Activated naive CD4-positive, alpha-beta T cell treated with anti-CD3 and anti-CD28 coated beads for 36 hours (primary cell): ENCODE measurements at regions of chr6 and their contacts with region 1.

Region 1: GRCh38 chr6:89638320-89639195 is at the start of gene LYRM2:
- DNase-seq: peak; percentile 95
- H3K4me3 Mint-ChIP-seq: peak within 1 kb of the TSS; percentile 83
- H3K27ac Mint-ChIP-seq: peak within 1 kb of the TSS; percentile 96
- H3K4me1 Mint-ChIP-seq: peaks cover 28% of the 10 kb centered on the region
- H3K27me3 Mint-ChIP-seq: no peaks in the 10 kb centered on the region
- total RNA-seq, gene LYRM2: 15.8 to 18.3 TPM

Region 2: DNA sequence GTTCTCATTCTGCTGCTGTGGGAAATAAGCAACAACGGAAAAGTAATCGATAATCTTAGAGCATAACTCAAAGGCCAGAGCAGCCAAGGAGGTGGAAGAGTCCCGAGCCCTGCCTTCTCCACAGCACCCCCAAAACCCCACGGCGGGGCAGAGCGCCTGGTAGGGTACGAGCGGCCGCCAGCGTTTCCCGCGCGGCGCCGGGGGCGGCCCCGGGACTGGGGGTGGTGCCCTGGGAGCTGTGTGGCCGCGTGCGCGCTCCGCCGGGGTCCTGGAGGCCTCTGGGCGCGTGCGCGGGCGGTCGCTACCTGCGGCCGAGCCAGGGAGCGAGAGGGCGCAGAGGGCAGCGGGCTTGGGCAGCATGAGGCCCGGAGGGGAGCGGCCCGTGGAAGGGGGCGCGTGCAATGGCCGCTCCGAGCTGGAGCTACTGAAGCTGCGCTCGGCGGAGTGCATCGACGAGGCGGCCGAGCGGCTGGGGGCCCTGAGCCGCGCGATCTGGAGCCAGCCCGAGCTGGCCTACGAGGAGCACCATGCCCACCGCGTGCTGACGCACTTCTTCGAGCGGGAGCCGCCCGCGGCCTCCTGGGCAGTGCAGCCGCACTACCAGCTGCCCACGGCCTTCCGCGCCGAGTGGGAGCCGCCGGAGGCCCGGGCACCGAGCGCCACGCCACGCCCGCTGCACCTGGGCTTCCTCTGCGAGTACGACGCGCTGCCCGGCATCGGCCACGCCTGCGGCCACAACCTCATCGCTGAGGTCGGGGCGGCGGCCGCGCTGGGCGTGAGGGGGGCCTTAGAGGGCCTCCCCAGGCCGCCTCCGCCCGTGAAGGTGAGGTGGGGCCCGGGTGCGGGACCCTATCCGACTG is 492.5 kb before region 1 on chr6 and contains the start of gene PM20D2:
- CTCF ChIA-PET with region 1: no interaction called
- intact Hi-C with region 1: loop called (anchors 1 kb)
- DNase-seq: peak; percentile 59
- H3K4me3 Mint-ChIP-seq: peak within 1 kb of the TSS; percentile 90
- H3K27ac Mint-ChIP-seq: peak within 1 kb of the TSS; percentile 96
- H3K4me1 Mint-ChIP-seq: peaks cover 27% of the 10 kb centered on the region
- H3K27me3 Mint-ChIP-seq: no peaks in the 10 kb centered on the region
- total RNA-seq, gene PM20D2: 11.6 to 12.7 TPM

Region 3: DNA sequence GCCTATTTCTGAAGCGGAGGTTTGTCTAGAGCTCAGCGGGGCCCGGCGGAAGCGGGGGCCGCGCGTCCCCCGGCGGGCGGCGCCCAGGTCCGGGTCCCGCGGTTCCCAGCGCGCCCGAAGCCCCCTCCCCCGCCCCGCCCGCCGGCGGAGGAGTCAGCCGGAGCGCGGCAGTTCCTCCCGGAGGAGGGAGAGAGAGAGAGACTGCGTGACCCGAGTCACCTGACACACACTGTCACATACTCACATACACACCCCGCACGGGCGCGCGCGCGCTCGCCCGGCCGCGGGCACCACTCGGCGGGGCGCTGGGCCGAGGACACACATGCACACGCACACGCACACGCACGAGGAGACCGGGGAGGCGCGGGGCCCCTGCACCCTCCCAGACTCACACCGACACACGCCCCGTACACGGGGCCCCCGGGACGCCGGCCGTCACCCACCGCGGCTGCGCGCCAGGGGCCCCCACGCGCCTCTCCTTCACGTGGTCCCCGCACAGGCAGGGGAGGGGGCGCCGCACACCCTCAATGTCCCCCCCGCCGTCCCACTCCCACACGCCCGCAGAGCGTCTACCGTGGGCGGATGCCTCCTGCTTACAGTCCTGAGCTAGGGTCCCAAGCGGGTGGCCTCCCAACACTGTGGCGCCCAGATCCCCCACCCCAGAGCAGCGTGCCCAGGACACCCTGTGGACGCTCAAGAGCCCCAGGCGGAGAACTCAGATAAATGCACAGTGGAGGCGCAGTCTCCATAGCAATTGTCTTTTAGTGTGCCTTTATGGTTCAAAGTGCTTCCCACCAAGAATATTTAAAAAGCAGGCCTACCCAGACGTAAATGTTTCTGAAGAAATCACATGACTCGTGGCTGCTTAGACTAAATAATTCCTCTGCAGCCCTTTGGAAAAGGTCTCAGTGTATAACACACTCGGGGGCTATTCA is 226.2 kb before region 1 on chr6 and contains the start of gene RRAGD:
- CTCF ChIA-PET with region 1: no interaction called
- intact Hi-C with region 1: loop called (anchors 1 kb)
- DNase-seq: peak; percentile 67
- H3K4me3 Mint-ChIP-seq: peak within 1 kb of the TSS; percentile 91
- H3K27ac Mint-ChIP-seq: peak within 1 kb of the TSS; percentile 31
- H3K4me1 Mint-ChIP-seq: peaks cover 23% of the 10 kb centered on the region
- H3K27me3 Mint-ChIP-seq: peaks cover 4% of the 10 kb centered on the region
- total RNA-seq, gene RRAGD: 11.3 to 13.2 TPM

Region 4: DNA sequence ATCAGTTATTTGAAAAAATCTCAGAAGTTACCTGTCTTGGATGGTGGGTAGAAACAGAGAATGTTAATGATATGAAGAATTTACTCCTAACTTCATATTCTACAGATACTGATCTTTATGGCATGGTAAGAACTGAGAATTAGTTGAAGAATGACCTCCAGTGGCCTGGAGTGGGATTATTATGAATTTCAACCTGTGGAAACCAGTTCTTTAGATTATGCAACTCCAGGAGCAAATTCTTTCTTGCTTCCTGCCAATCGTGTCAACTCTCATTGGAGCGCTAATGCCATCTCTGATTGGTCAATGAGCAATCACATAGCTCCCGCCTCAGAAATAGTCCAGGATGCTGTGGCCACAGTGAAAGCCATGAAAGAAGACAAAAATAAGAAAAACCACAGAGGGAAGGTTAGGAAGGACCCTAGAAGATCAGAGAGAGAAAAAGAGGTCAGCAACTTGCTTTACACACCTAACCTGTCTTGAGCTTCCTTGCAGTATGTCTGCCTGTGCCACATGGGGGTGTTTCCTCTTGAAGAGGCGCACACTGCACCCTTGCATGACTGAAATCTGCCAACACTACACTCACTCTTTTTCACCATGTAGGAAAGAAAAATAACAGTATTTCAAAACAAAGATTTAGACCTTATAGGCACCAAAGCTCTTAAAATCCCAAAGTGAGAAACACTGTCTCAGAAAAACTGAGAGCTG is 40.4 kb before region 1 on chr6:
- CTCF ChIA-PET with region 1: no interaction called
- intact Hi-C with region 1: loop called (anchors 2 kb)
- DNase-seq: peak; percentile 7
- H3K4me3 Mint-ChIP-seq: no peak overlapping the region
- H3K27ac Mint-ChIP-seq: no peak overlapping the region
- H3K4me1 Mint-ChIP-seq: peaks cover 18% of the 10 kb centered on the region
- H3K27me3 Mint-ChIP-seq: no peaks in the 10 kb centered on the region

Region 5: GRCh38 chr6:89649672-89650071 is 11.1 kb after region 1 on chr6:
- CTCF ChIA-PET with region 1: no interaction called
- intact Hi-C with region 1: no loop called
- DNase-seq: no peak
- H3K4me3 Mint-ChIP-seq: no peak overlapping the region
- H3K27ac Mint-ChIP-seq: no peak overlapping the region
- H3K4me1 Mint-ChIP-seq: peaks cover 3% of the 10 kb centered on the region
- H3K27me3 Mint-ChIP-seq: no peaks in the 10 kb centered on the region

Region 6: DNA sequence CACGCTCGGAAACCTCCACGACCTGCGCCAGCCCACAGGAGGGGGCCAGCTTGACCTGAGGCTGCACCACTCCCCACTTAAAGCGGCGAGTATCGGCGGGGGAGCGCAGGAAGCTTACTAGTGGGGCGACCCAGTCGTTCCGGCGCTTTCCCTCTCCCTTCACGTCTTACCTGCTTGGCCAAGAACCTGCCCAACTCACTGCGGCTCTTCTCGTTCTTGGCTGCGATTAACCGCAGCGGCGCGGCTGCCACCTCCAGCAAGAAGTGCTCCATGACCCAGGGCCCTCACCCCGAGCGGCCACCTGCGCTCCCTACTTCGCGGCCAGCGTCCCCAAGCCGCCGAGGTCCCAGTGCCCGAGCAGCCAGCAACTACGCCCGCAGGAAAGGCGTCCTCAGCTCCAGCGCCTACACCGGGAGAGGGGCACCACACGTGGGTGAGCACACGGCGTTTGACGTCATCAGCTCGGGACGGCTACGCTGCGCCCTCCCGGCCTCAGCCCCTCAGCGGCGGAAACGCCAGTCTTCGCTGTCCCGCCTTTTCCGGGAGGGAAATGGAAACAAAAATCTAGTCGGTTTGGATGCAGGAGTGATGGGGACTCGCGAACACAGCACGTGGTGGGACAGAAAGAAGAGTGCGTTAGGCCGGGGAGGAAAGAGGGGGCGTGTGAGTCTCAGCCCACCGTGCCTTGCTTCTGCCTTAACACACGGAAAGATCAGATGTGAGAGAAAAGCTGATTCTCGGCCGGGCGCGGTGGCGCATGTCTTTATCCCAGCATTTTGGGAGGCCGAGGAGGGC is 181.0 kb after region 1 on chr6 and contains the start of gene MDN1:
- CTCF ChIA-PET with region 1: no interaction called
- intact Hi-C with region 1: loop called (anchors 1 kb)
- DNase-seq: peak; percentile 94
- H3K4me3 Mint-ChIP-seq: peak within 1 kb of the TSS; percentile 82
- H3K27ac Mint-ChIP-seq: peak within 1 kb of the TSS; percentile 88
- H3K4me1 Mint-ChIP-seq: peaks cover 36% of the 10 kb centered on the region
- H3K27me3 Mint-ChIP-seq: no peaks in the 10 kb centered on the region
- total RNA-seq, gene MDN1: 42.1 to 52.1 TPM

Region 7: DNA sequence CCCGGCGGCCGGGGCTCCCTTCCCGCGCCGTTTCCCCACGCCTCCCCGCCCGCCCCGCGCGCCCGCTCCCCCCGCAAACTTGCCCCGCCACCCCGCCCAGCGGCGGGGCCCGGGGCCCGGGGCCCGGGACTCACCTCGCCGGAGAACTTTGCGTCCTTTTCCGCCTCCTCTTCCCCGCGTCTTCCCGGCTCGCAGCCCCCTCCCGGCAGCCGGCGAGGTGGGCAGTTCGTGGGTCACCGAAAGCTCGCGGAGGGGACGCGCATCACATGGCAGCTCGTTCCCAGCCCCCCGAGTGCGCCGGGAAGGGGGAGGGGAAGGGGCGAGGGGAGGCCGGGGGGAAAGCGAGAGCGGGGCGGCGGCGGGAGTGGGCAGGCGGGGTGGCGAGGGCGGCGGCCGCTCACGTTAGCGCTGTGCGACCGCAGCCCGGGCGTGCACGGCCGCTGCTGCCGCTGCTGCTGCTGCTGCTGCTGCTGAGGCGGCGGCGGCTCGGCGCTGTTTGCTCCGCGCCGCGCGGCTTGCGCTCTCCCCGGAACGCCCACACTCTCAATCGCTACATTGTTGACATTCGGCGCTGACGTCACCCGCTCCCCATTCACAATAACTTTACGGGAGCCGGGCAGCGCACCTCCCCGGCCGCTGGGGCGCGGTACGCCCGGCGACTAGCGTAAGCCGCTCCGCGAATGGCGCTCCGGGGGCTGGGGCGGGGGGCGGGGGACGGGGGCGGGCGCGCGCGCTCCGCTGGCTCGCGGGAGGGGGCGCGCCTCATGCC is 658.0 kb after region 1 on chr6 and contains the start of gene BACH2:
- CTCF ChIA-PET with region 1: no interaction called
- intact Hi-C with region 1: loop called (anchors 5 kb)
- DNase-seq: peak; percentile 99
- H3K4me3 Mint-ChIP-seq: peak within 1 kb of the TSS; percentile 86
- H3K27ac Mint-ChIP-seq: peak within 1 kb of the TSS; percentile 97
- H3K4me1 Mint-ChIP-seq: peaks cover 41% of the 10 kb centered on the region
- H3K27me3 Mint-ChIP-seq: peaks cover 2% of the 10 kb centered on the region
- total RNA-seq, gene BACH2: 75.1 to 77.9 TPM